Activated CD4-positive, alpha-beta T cell treated with anti-CD3 and anti-CD28 coated beads, Interleukin-2, amount 10 ng/mL, durations not matched to agents 24 days and 14 days (primary cell): ENCODE measurements at regions of chr11 and their contacts with region 1.

Region 1: DNA sequence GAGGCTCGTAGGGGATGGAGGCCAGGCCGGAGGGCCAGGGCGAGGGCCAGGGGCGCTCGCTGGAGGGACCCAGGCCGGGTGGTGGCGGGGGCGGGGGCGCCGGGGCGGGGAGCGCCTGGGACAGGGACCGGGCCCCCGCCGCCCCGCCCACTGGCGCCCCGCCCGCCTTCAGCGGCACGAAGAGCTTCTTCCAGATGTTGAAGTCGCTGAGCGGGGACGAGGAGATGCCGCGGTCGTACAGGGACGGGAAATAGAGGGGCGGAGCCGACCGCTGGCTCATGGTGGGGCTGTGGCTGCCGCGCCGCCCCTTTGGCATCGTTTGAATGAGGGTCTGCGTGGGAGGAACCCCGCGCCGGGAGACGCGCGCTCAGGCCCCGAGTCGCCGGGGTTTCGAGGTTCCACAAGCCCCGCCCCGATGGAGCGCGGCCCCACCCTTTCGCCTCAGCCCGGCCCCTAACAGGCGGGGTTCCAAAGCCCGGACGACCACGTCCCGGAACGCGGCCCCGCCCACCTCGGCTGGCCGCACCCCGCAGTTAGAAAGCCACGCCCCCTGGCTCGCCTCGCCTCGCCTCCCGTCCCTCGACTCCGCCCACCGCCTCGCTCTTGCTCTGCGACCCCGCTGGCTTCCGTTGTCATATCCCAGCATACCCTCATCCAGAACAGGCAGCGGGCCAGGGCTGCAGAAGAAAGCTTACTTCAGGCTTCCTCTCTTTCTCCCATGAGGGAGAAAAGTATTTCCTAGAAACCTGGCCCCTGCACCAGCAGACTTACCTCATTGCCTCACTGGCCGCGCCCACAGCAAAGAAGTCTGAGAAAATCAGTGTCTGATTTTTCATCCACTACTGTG is at the start of gene C11orf91:
- DNase-seq: peak; percentile 99
- H3K4me3 Mint-ChIP-seq: peak within 1 kb of the TSS; percentile 92
- H3K27ac Mint-ChIP-seq: peak within 1 kb of the TSS; percentile 68
- H3K4me1 Mint-ChIP-seq: peaks cover 20% of the 10 kb centered on the region
- H3K27me3 Mint-ChIP-seq: peaks cover 25% of the 10 kb centered on the region
- total RNA-seq, gene C11orf91: 0.51 TPM in 1 of 2 replicates, not detected in the other

Region 2: GRCh38 chr11:33722579-33723225 is 22.1 kb after region 1 on chr11:
- intact Hi-C with region 1: loop called (anchors 2 kb)
- DNase-seq: peak; percentile 76
- H3K4me3 Mint-ChIP-seq: peak overlapping the region; percentile 62
- H3K27ac Mint-ChIP-seq: peak overlapping the region; percentile 88
- H3K4me1 Mint-ChIP-seq: peaks cover 60% of the 10 kb centered on the region
- H3K27me3 Mint-ChIP-seq: peaks cover 2% of the 10 kb centered on the region

Region 3: DNA sequence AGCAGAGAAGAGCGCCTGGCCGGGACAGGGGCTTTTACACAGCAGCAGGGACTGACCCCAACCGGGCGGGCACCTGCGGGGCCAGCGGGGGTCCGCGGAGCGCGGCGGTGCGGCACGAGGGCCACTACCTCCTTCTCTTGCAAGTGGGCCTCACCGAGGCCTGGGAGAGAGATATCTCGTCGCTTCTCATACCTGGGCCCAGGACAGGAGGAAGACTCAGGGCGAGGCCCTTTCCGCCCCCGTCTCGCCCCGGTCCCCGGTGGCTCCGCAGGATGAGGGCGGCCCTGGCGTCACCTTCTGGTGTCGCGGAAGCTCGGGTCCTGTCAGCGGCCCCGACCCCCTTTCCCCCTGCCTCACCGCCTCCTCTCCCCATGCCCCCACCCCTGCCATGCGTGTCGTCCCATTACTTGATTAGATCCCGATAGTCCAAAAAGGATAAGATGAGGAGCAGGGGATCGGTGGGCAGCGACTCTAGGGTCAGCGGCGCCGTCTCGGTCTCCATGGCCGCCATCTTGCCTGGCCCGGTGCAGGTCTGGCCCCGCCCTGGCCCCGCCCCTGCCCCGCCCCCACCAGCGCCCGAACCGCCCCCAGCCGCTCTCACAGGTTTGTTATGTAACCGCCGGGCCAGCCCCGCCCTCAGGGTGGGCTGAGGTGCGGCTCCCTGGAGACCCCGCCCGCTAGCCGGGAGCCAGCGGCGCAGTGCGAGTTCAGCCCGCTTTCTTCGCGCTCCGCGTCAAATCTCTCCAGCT is 73.5 kb after region 1 on chr11 and contains the start of gene FBXO3:
- intact Hi-C with region 1: loop called (anchors 1 kb)
- DNase-seq: peak; percentile 96
- H3K4me3 Mint-ChIP-seq: peak within 1 kb of the TSS; percentile 97
- H3K27ac Mint-ChIP-seq: peak within 1 kb of the TSS; percentile 94
- H3K4me1 Mint-ChIP-seq: peaks cover 23% of the 10 kb centered on the region
- H3K27me3 Mint-ChIP-seq: peaks cover 26% of the 10 kb centered on the region
- total RNA-seq, gene FBXO3: 18.1 and 20.9 TPM in 2 replicates